CD4-positive, alpha-beta memory T cell (primary cell): ENCODE measurements at regions of chr12 and their contacts with region 1.

Region 1: GRCh38 chr12:109880016-109880931 is at the start of gene GLTP:
- DNase-seq: peak; percentile 83 to 95 (median 93)
- H3K4me3 ChIP-seq: peak within 1 kb of the TSS; percentile 82 to 97
- H3K4me3 Mint-ChIP-seq: peak within 1 kb of the TSS; percentile 94 to 98 (median 96)
- H3K27ac ChIP-seq: peak within 1 kb of the TSS; percentile 96
- H3K27ac Mint-ChIP-seq: peak within 1 kb of the TSS; percentile 92 to 99 (median 98)
- H3K4me1 ChIP-seq: peaks cover 42% of the 10 kb centered on the region
- H3K4me1 Mint-ChIP-seq: peaks cover 30 to 56% (median 44%) of the 10 kb centered on the region in 4 donors
- H3K27me3 ChIP-seq: no peaks in the 10 kb centered on the region
- H3K27me3 Mint-ChIP-seq: peaks cover 0 to 2% of the 10 kb centered on the region in 2 donors
- total RNA-seq, gene GLTP: 24.0 TPM

Region 2: DNA sequence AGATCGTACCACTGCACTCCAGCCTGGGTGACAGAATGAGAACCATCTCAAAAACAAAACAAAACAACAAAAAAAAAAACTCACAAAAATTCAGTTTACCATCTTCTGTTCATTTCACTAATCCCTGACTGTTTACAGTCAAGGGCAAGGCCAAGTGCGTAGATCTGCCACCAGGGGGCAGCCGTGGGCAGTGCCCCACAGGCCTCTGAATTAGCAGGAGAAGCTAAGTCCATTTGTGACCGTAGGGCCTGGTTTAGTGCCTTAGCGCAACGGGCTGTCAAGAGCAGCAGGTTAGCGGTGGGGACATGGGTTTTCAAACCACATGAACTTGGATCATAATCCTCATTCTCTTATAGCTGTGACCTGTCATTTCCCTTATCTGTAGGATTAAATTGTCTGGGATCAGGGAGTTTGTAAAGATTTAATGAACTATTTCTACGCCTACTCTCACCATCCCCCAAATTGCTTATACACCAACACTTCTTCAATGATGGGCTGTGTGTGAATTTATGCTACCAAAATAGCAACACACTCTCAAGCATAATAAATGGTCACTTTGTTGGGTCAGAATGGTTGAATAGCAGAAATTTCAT is 452.1 kb before region 1 on chr12:
- CTCF ChIA-PET with region 1: no interaction called
- POLR2A ChIA-PET with region 1: no interaction called
- intact Hi-C with region 1: loop called (anchors 2 kb)
- DNase-seq: peak; percentile 57 to 70 (median 64)
- H3K4me3 ChIP-seq: no peak overlapping the region
- H3K4me3 Mint-ChIP-seq: no peak overlapping the region
- H3K27ac ChIP-seq: no peak overlapping the region
- H3K27ac Mint-ChIP-seq: no peak overlapping the region
- H3K4me1 ChIP-seq: peaks cover 4% of the 10 kb centered on the region
- H3K4me1 Mint-ChIP-seq: peaks cover 2 to 7% (median 6%) of the 10 kb centered on the region in 4 donors
- H3K27me3 ChIP-seq: no peaks in the 10 kb centered on the region
- H3K27me3 Mint-ChIP-seq: peaks cover 8 to 11% of the 10 kb centered on the region in 2 donors

Region 3: GRCh38 chr12:109573029-109573913 is 307.0 kb before region 1 on chr12 and contains the starts of genes MMAB and MVK:
- CTCF ChIA-PET with region 1: no interaction called
- POLR2A ChIA-PET with region 1: no interaction called
- intact Hi-C with region 1: no loop called
- DNase-seq: peak; percentile 99 to 100 (median 99)
- H3K4me3 ChIP-seq: peak within 1 kb of the TSS; percentile 73 to 82
- H3K4me3 Mint-ChIP-seq: peak within 1 kb of the TSS; percentile 91 to 95 (median 92)
- H3K27ac ChIP-seq: peak within 1 kb of the TSS; percentile 92
- H3K27ac Mint-ChIP-seq: peak within 1 kb of the TSS; percentile 91 to 99 (median 98)
- H3K4me1 ChIP-seq: peaks cover 19% of the 10 kb centered on the region
- H3K4me1 Mint-ChIP-seq: peaks cover 18 to 28% (median 22%) of the 10 kb centered on the region in 4 donors
- H3K27me3 ChIP-seq: no peaks in the 10 kb centered on the region
- H3K27me3 Mint-ChIP-seq: no peaks in the 10 kb centered on the region
- total RNA-seq, gene MMAB: 16.0 to 16.9 TPM
- total RNA-seq, gene MVK: 10.0 to 11.0 TPM

Region 4: DNA sequence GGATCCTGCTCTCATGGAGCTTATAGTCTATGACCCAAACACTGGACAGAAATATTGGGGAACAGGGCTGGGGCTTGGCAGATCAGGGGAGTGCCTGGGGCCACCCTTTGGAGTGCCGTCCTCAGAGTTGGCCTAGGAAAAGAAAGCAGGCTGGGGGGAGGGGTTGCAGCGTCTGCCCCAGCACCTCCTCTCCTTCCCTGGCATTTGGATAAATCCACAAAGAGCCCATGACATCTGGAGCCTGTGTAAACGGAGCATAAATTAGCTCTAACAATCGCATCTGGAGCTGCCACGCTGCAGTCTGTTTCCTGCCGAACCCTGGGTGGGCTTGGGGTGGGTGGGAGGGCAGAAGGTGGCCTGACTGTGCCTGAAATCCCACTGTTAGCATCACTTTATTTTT is 242.9 kb before region 1 on chr12:
- CTCF ChIA-PET with region 1: no interaction called
- POLR2A ChIA-PET with region 1: no interaction called
- intact Hi-C with region 1: no loop called
- DNase-seq: no peak
- H3K4me3 ChIP-seq: no peak overlapping the region
- H3K4me3 Mint-ChIP-seq: no peak overlapping the region
- H3K27ac ChIP-seq: no peak overlapping the region
- H3K27ac Mint-ChIP-seq: no peak overlapping the region
- H3K4me1 ChIP-seq: no peaks in the 10 kb centered on the region
- H3K4me1 Mint-ChIP-seq: no peaks in the 10 kb centered on the region
- H3K27me3 ChIP-seq: no peaks in the 10 kb centered on the region
- H3K27me3 Mint-ChIP-seq: peaks cover 5 to 8% of the 10 kb centered on the region in 2 donors

Region 5: DNA sequence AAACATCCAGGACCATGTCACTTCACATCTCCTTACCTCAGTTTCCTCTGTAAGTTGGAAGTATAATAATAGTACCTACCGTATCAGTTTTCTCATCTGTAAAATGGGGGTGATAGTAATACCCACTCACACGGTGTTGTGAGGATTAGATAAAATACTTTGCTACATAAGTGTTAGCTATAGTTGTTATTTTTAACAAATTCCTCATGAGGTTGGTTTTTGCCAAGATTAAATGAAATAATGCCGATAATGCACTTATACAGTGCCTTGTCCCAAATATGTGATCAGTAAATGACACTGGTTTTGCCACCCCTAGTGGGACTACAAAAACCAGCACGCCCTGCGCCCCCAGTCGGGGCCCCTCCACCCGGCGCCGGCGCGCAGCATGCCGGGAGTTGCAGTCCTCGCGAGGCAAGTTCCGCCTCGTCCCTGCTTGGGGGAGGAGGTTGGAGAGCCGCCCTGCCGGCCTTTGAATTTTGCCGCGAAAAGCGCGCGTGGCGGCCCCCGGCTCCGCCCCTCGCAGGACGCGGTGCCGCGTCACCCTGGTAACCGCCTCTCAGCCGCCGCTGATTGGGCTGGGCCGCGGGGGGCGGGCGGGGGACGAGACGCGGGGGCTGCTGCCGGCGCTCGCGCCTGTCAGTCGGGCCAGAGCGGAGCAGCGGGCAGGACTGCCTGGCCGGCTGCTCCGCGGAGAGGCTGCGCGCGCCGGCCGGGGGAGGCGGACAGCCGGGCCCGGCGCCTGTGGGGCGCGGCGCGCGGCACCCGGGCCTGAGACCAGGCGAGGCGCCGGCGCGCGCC is 166.9 kb before region 1 on chr12 and contains the start of gene FAM222A:
- CTCF ChIA-PET with region 1: no interaction called
- POLR2A ChIA-PET with region 1: no interaction called
- intact Hi-C with region 1: loop called (anchors 1 kb)
- DNase-seq: peak; percentile 97 to 98 (median 98)
- H3K4me3 ChIP-seq: peak within 1 kb of the TSS in 1 of 2 donors; percentile 60
- H3K4me3 Mint-ChIP-seq: peak within 1 kb of the TSS; percentile 27 to 84 (median 72)
- H3K27ac ChIP-seq: peak within 1 kb of the TSS; percentile 30
- H3K27ac Mint-ChIP-seq: peak within 1 kb of the TSS in 4 of 7 donors; percentile 6 to 66 (median 43)
- H3K4me1 ChIP-seq: peaks cover 12% of the 10 kb centered on the region
- H3K4me1 Mint-ChIP-seq: peaks cover 0 to 6% (median 1%) of the 10 kb centered on the region in 4 donors
- H3K27me3 ChIP-seq: peaks cover 18% of the 10 kb centered on the region
- H3K27me3 Mint-ChIP-seq: peaks cover 13 to 18% of the 10 kb centered on the region in 2 donors
- total RNA-seq, gene FAM222A: 0.55 to 0.69 TPM

Region 6: DNA sequence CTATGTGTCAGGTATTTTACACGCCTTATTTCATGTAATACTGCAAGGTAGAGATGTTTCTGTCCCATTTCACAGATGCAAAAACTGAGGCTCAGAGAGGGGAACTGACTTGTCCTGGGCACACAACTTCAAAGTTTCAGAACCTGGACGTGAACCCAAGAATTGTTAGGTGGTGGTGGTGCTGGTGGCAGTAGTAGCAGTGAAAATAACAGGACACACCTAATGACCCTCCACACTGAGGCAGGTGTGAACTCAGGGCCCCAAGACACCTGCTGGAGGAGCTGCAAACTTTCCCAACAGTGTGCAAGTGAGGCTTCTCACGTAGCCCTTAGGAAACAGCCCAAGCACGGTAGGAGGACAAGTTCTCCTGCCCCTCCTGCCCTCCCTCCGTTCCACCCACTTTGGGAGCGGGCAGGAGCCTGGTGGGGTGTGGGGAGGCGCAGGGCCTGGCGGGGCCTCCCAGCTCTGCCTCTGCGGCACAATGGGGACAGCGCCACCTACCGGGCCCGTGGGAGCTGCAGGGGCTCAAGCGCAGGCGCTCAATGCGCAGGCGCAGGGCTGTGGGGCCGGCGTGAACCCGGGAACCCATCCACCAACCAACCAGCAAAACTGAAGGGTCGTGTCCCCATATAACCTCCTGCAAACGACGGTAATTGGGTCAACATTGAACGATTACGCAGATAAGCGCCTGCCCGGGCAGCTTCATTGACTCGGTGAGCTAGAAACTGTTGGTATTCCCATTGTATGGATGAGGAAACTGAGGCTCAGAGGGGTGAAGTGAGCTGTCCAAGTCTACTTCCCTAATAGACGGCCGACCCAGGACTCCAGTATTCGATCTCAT is 35.1 kb before region 1 on chr12:
- CTCF ChIA-PET with region 1: interaction called, 20 read pairs
- POLR2A ChIA-PET with region 1: no interaction called
- intact Hi-C with region 1: no loop called
- DNase-seq: peak; percentile 77 to 88 (median 80)
- H3K4me3 ChIP-seq: peak overlapping the region in 1 of 2 donors; percentile 43
- H3K4me3 Mint-ChIP-seq: peak overlapping the region; percentile 32 to 62 (median 51)
- H3K27ac ChIP-seq: no peak overlapping the region
- H3K27ac Mint-ChIP-seq: peak overlapping the region in 2 of 7 donors; percentile 32 to 77
- H3K4me1 ChIP-seq: peaks cover 9% of the 10 kb centered on the region
- H3K4me1 Mint-ChIP-seq: peaks cover 4 to 10% (median 7%) of the 10 kb centered on the region in 4 donors
- H3K27me3 ChIP-seq: no peaks in the 10 kb centered on the region
- H3K27me3 Mint-ChIP-seq: no peaks in the 10 kb centered on the region

Region 7: GRCh38 chr12:109899783-109900751 is 19.8 kb after region 1 on chr12 and contains the start of gene TCHP:
- CTCF ChIA-PET with region 1: interaction called, 4 read pairs
- POLR2A ChIA-PET with region 1: interaction called, 16 read pairs
- intact Hi-C with region 1: loop called (anchors 2 kb)
- DNase-seq: peak; percentile 76 to 83 (median 80)
- H3K4me3 ChIP-seq: peak within 1 kb of the TSS; percentile 72 to 87
- H3K4me3 Mint-ChIP-seq: peak within 1 kb of the TSS; percentile 90 to 99 (median 94)
- H3K27ac ChIP-seq: peak within 1 kb of the TSS; percentile 70
- H3K27ac Mint-ChIP-seq: peak within 1 kb of the TSS; percentile 85 to 99 (median 97)
- H3K4me1 ChIP-seq: peaks cover 22% of the 10 kb centered on the region
- H3K4me1 Mint-ChIP-seq: peaks cover 14 to 37% (median 23%) of the 10 kb centered on the region in 4 donors
- H3K27me3 ChIP-seq: no peaks in the 10 kb centered on the region
- H3K27me3 Mint-ChIP-seq: no peaks in the 10 kb centered on the region
- total RNA-seq, gene TCHP: 41.4 to 45.0 TPM